ENCODE measurements at regions of chr1 and their contacts with region 1.

Region 1: DNA sequence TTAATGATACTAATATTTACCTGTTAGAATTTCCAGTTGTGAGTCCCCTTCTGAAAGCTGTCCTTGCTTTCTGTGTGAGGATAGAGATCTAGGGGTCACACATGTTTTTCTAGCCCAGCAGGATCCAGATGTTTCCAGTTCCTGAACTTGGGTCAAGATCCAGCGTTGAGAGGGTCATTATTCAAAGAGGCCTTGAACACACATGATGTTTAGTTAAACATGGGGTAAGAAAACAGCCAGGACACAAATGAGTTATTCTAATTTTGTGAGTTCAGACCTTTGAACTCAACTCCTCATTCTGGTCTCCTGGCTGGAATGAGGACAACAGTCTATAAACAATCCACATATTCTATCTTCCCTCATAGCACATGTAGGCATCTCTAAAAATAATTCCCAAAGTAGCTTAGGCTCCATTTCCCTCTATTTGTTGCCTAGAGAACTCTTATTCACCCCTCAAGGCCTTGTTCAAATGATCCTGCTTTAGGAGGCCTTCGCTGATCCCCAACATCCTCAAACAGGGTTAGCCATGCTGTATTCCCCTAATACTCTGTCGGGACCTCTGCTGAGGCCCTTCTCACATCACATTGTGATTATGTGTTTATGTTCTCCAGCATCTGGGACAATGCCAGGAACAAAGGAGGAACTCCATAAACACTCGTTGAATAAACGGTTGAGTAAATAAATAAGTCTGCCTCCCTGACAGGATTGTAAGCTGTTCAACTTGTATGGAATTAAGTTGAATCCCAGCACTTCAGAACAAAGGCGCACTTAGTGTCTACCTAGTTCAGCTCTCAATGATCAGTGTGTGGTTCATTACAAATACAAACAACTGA is 15.0 kb upstream of the KCNN3 start:
- DNase-seq: peak; percentile 53 to 92 (median 85)
- H3K4me3 ChIP-seq: no peak overlapping the region
- H3K27ac ChIP-seq: peak overlapping the region in 1 of 2 experiments; percentile 10
- H3K4me1 ChIP-seq: peaks cover 12 to 39% (median 32%) of the 10 kb centered on the region in 4 experiments
- H3K27me3 ChIP-seq: no peaks in the 10 kb centered on the region

Region 2: DNA sequence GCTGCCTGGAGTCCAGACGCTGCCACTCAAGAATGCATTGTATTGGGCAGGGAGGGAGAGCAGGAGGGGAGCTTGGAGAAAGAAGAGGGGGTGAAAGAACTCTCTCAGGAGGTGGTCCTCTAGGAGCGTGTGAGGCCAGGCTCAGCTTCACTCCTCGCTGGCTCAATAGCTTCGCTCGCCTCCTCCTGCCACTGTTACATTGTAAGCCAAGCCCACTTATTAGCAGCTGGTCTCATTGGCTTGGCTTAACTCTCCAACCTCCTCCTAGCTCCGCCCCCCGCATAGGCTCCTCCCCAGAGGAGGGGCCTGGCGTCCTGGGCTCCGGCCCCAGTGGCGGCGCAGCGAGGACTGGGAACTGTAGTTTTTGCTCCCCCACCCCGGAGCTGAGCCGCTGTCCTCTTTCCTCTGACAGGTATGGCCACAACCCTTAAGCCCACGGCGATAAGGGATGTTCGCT is 14.9 kb before region 1 on chr1 and contains the start of gene KCNN3:
- CTCF ChIA-PET with region 1: interaction called, 30 read pairs
- POLR2A ChIA-PET with region 1: no interaction called
- DNase-seq: peak; percentile 83 to 91 (median 91)
- H3K4me3 ChIP-seq: peak within 1 kb of the TSS in 4 of 7 experiments; percentile 12 to 59 (median 44)
- H3K27ac ChIP-seq: no peak within 1 kb of the TSS
- H3K4me1 ChIP-seq: peaks cover 0 to 29% (median 27%) of the 10 kb centered on the region in 4 experiments
- H3K27me3 ChIP-seq: peaks cover 0 to 40% (median 11%) of the 10 kb centered on the region in 5 experiments

Region 3: GRCh38 chr1:154911691-154912550 is 26.8 kb after region 1 on chr1:
- CTCF ChIA-PET with region 1: no interaction called
- POLR2A ChIA-PET with region 1: no interaction called
- DNase-seq: no peak
- H3K4me3 ChIP-seq: no peak overlapping the region
- H3K27ac ChIP-seq: no peak overlapping the region
- H3K4me1 ChIP-seq: no peaks in the 10 kb centered on the region
- H3K27me3 ChIP-seq: no peaks in the 10 kb centered on the region

Measured in common myeloid progenitor, CD34-positive (primary cell).